BJ (cell line): ENCODE measurements at regions of chr3 and their contacts with region 1.

Region 1: DNA sequence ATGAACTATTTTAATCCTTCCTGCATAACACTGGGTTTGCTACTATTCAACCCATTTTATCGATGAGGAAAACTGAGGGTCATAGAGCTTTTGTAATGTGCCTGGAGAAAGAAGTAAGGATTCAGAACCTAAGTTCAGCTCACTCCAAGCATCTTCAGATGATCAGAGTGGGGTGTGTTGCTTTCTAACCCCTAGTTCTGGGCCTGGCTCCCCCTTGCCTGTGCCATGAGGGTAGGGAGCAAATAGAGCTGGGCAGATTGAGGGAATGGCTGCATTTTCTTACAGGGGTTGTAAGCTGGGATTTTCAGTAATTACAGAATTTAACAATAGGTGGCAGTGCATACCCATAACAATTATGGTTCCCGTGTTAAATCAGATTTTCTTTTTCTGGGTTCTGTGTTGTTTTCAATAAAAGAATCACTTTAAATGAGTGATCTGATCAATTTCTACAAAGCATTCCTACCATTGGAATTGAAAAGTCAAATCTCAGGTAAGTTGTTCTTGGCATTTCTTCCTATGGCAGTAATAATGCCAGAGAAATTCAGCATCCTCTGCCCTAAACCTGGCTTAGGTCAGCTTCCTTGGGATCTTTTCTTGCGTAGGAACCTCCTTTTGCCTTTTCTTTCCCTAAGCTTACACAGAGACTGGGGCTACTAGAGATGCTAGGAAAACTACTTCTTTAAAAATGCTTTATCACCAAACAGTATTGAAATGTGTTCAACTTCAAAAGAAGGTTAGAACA is 103.8 kb upstream of the IL12A start:
- DNase-seq: no peak
- H3K4me3 ChIP-seq: no peak overlapping the region
- H3K27me3 ChIP-seq: no peaks in the 10 kb centered on the region
- CTCF ChIP-seq: peak; percentile 48

Region 2: DNA sequence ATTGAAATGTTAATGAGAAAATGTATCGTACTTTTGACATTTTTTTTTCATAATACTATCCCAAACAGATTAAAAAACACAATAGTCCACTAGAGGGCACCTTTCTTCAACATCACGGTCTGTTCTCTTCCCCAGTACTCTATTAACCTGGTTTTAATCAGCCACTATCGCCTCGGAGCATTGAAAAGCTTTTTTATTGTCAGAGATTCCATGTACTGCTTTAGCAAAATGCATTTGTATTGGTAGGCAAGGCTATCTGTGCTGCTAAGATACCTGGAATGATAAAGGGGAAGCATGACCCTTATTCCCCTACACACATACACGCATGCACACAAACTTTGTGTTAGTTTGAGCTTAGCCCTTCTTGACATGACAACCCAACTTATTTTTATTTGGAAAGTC is 56.3 kb before region 1 on chr3:
- CTCF ChIA-PET with region 1: interaction called, 19 read pairs
- POLR2A ChIA-PET with region 1: no interaction called
- DNase-seq: no peak
- H3K4me3 ChIP-seq: no peak overlapping the region
- H3K27me3 ChIP-seq: no peaks in the 10 kb centered on the region
- CTCF ChIP-seq: peak; percentile 36

Region 3: GRCh38 chr3:159897331-159898075 is 12.7 kb after region 1 on chr3:
- CTCF ChIA-PET with region 1: interaction called, 42 read pairs
- POLR2A ChIA-PET with region 1: interaction called, 4 read pairs
- DNase-seq: peak; percentile 31
- H3K4me3 ChIP-seq: no peak overlapping the region
- H3K27me3 ChIP-seq: no peaks in the 10 kb centered on the region
- CTCF ChIP-seq: no peak